ENCODE measurements at regions of chr7 and their contacts with region 1.

Region 1: GRCh38 chr7:131071786-131072504 is 255.7 kb upstream of the MKLN1 start:
- DNase-seq: no peak
- ATAC-seq: peak; percentile 39

Region 2: DNA sequence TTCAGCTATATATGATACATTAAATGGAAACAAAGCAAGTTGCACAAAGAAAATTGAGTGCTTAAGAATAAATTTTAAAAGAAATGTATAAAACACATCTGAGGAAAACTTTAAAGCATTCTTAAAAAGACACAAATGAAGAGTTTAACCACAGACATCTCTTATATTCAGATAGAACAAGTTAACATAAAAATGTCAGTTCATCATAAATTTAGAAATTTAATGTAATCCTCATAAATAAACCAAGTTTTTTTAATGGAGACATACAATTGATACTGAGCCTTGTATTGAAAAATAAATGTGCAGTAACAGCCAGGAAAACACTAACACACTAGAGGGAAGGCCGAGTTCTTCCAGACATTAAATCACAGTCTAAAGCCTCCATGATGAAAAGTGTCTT is 11.8 kb after region 1 on chr7:
- intact Hi-C with region 1: no loop called
- DNase-seq: no peak
- ATAC-seq: no peak

Region 3: GRCh38 chr7:131424219-131424822 is 352.4 kb after region 1 on chr7:
- intact Hi-C with region 1: loop called (anchors 5 kb)
- DNase-seq: no peak
- ATAC-seq: peak; percentile 67

Measured in left ventricle myocardium superior (tissue), 1 donor.